Sciatic nerve (tissue), 2 donors: ENCODE measurements at regions of chr2 and their contacts with region 1.

Region 1: GRCh38 chr2:143710196-143710595 is 581.0 kb downstream of the ARHGAP15 start:
- DNase-seq: no peak
- ATAC-seq: no peak

Region 2: DNA sequence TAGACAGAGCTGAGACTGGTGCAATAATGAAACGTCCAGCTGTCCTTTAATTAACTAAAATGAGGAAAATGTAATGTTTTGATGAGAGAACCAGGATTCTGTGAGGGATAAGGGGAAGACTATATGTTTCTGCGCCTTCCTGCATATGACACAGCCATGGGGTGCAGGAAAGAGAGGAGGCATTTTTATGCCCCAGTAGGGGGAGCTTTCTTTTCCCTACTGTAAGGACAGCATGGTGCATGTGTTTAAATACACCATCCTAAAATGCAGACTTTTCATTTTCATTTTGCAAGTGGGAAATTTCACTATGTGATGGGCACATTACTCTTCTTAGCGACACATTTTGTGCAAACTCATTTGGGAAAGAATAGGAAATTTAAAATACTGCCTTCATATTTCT is 134.9 kb before region 1 on chr2:
- intact Hi-C with region 1: no loop called
- DNase-seq: no peak
- ATAC-seq: no peak

Region 3: DNA sequence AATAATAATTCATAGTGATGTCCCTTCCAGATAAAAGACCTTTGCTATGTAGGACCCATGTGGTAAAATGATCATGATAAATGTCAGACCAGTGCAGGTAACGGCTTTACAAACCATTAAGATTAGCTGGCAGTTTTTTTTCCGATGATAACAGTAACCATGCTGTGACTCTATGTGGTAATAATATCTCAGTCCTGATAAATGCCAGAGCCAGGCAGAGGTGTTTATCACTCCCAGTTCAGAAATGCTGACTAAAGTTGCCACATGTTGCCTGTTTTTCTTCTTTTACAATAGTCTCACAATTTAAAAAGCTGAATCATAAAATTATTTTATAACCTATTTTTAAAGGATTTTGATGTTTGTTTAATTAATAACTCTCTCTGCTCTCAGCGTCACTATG is 15.9 kb before region 1 on chr2:
- intact Hi-C with region 1: loop called (anchors 2 kb)
- DNase-seq: no peak
- ATAC-seq: no peak